ENCODE measurements at regions of chrX and their contacts with region 1.

Region 1: GRCh38 chrX:69615779-69616456 is at the start of gene EDA:
- DNase-seq: peak; percentile 34
- ATAC-seq: peak; percentile 95
- H3K4me3 ChIP-seq: peak within 1 kb of the TSS; percentile 33
- H3K27ac ChIP-seq: no peak within 1 kb of the TSS
- H3K4me1 ChIP-seq: no peaks in the 10 kb centered on the region
- H3K27me3 ChIP-seq: peaks cover 17% of the 10 kb centered on the region
- CTCF ChIP-seq: no peak
- POLR2A ChIP-seq: no peak
- RAD21 ChIP-seq: no peak
- total RNA-seq, gene EDA: under 0.01 TPM in 2 replicates

Region 2: GRCh38 chrX:69538321-69538876 is 77.5 kb before region 1 on chrX:
- CTCF ChIA-PET with region 1: no interaction called
- POLR2A ChIA-PET with region 1: no interaction called
- dilution Hi-C with region 1: no loop called
- in situ Hi-C with region 1: no loop called
- intact Hi-C with region 1: loop called (anchors 2 kb)
- DNase-seq: peak; percentile 16
- ATAC-seq: peak; percentile 98
- H3K4me3 ChIP-seq: no peak overlapping the region
- H3K27ac ChIP-seq: no peak overlapping the region
- H3K4me1 ChIP-seq: no peaks in the 10 kb centered on the region
- H3K27me3 ChIP-seq: peaks cover 4% of the 10 kb centered on the region
- CTCF ChIP-seq: peak; percentile 61
- POLR2A ChIP-seq: no peak
- RAD21 ChIP-seq: peak; percentile 69

Measured in IMR-90 (cell line).